SK-N-SH (cell line): ENCODE measurements at regions of chr1 and their contacts with region 1.

Region 1: DNA sequence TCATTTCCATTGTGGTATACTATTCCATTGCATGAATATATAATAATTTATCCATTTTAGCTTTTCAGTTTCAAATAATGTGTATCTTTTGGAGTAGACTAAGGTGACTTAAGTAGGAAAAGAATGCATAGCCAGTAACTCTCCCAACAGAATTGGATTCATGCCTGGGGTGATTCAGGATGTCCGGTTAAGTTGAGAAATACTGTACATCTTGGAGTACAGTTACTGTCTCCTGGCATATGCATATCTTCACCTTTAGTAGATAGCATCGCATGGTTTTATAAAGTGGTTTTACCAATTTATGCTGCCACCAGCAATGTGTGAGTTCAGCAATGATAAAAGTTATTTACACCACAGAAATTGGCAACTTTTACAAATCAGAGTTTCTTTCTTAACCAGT is 18.6 kb upstream of the SLC6A9 start:
- DNase-seq: no peak
- H3K4me3 ChIP-seq: peak overlapping the region in 1 of 2 experiments; percentile 32; a peak in 1 of 4 replicates
- H3K27ac ChIP-seq: peak overlapping the region in 1 of 2 experiments; percentile 91; a peak in 2 of 4 replicates
- H3K4me1 ChIP-seq: peaks cover 0 to 17% of the 10 kb centered on the region in 2 experiments
- H3K27me3 ChIP-seq: no peaks in the 10 kb centered on the region
- CTCF ChIP-seq: no peak
- EP300 ChIP-seq: peak in 1 of 2 experiments; percentile 89; a peak in 2 of 4 replicates
- RAD21 ChIP-seq: no peak

Region 2: DNA sequence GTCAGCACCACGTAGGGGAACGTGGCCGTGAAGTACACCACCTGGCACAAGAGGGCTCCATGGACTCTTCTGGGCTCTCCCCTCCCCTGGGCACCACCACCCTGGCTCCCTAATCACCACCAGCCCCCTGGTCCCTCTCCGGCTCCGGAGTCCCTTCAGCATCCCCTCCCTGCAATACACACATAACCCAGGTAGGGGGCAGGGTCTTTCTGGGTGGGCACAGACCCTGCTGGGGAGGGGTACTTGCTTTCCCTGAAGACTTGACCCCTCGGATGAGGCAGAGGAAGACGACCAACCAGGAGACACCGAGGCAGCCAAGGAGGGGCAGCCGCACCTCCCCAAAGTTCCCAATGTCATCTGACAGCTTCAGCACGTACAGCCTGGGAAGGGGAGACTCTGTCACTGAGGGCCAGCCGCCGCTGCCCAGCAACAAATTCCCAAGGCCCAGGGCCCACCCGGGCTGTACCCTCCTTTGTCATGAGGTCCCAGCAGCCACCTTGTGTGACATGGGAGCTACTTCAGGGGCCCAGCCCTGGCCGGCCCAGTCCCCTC is 47.2 kb before region 1 on chr1:
- CTCF ChIA-PET with region 1: interaction called, 153 read pairs
- POLR2A ChIA-PET with region 1: no interaction called
- DNase-seq: peak; percentile 59
- H3K4me3 ChIP-seq: no peak overlapping the region
- H3K27ac ChIP-seq: no peak overlapping the region
- H3K4me1 ChIP-seq: peaks cover 0 to 31% of the 10 kb centered on the region in 2 experiments; a peak in 2 of 4 replicates
- H3K27me3 ChIP-seq: no peaks in the 10 kb centered on the region
- CTCF ChIP-seq: peak; percentile 30
- EP300 ChIP-seq: no peak
- RAD21 ChIP-seq: no peak

Region 3: GRCh38 chr1:44012941-44013609 is 36.8 kb before region 1 on chr1:
- CTCF ChIA-PET with region 1: interaction called, 20 read pairs
- POLR2A ChIA-PET with region 1: no interaction called
- DNase-seq: no peak
- H3K4me3 ChIP-seq: no peak overlapping the region
- H3K27ac ChIP-seq: no peak overlapping the region
- H3K4me1 ChIP-seq: peaks cover 3 to 6% of the 10 kb centered on the region in 2 experiments; a peak in 2 of 4 replicates
- H3K27me3 ChIP-seq: no peaks in the 10 kb centered on the region
- CTCF ChIP-seq: no peak
- EP300 ChIP-seq: no peak
- RAD21 ChIP-seq: no peak

Region 4: DNA sequence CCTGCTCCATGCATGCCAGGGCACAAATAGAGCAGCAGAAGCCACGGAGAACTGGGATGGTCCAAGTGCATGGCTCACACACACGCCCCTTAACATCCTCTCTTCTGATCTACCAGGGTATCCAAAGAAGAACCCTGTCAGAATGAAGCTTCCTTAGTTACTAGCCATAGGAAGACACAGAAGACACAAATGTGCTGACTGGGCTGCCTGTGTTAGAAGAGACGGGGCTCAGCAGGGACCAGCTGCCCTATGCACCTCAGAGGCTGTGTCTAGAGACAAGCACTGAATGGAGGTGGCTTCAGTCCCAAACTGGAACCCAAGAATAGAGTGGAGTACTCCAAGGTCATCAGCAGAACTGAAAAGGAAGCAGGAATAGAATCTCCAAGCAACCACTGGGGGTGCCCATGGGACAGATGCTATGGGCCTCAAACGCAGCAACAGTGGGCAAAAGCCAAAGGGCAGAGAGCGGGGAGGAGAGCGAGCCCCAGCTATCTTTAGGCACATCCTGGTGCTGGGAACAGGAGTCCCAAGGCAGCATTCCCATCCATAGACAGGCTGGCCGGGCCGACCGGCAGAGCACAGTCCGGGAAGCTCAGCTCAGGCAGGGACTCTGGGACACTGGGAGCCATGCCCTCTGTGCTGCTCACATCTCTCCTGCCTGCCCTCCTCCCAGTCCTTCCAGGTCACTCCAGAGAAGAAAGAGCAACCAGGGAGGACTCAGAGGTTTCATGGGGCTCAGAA is 28.1 kb before region 1 on chr1:
- CTCF ChIA-PET with region 1: interaction called, 14 read pairs
- POLR2A ChIA-PET with region 1: no interaction called
- DNase-seq: no peak
- H3K4me3 ChIP-seq: no peak overlapping the region
- H3K27ac ChIP-seq: no peak overlapping the region
- H3K4me1 ChIP-seq: peaks cover 0 to 14% of the 10 kb centered on the region in 2 experiments; a peak in 1 of 4 replicates
- H3K27me3 ChIP-seq: no peaks in the 10 kb centered on the region
- CTCF ChIP-seq: no peak
- EP300 ChIP-seq: no peak
- RAD21 ChIP-seq: no peak

Region 5: GRCh38 chr1:44029906-44030604 is 19.8 kb before region 1 on chr1:
- CTCF ChIA-PET with region 1: interaction called, 106 read pairs
- POLR2A ChIA-PET with region 1: interaction called, 4 read pairs
- DNase-seq: peak; percentile 88
- H3K4me3 ChIP-seq: peak overlapping the region; percentile 82 to 93
- H3K27ac ChIP-seq: peak overlapping the region; percentile 74 to 87
- H3K4me1 ChIP-seq: peaks cover 11 to 25% of the 10 kb centered on the region in 2 experiments; a peak in 2 of 4 replicates
- H3K27me3 ChIP-seq: no peaks in the 10 kb centered on the region
- CTCF ChIP-seq: no peak
- EP300 ChIP-seq: no peak
- RAD21 ChIP-seq: no peak

Region 6: GRCh38 chr1:44068442-44068921 is 18.6 kb after region 1 on chr1:
- CTCF ChIA-PET with region 1: interaction called, 10 read pairs
- POLR2A ChIA-PET with region 1: no interaction called
- DNase-seq: no peak
- H3K4me3 ChIP-seq: no peak overlapping the region
- H3K27ac ChIP-seq: no peak overlapping the region
- H3K4me1 ChIP-seq: peaks cover 0 to 4% of the 10 kb centered on the region in 2 experiments; a peak in 1 of 4 replicates
- H3K27me3 ChIP-seq: no peaks in the 10 kb centered on the region
- CTCF ChIP-seq: no peak
- EP300 ChIP-seq: no peak
- RAD21 ChIP-seq: no peak

Region 7: DNA sequence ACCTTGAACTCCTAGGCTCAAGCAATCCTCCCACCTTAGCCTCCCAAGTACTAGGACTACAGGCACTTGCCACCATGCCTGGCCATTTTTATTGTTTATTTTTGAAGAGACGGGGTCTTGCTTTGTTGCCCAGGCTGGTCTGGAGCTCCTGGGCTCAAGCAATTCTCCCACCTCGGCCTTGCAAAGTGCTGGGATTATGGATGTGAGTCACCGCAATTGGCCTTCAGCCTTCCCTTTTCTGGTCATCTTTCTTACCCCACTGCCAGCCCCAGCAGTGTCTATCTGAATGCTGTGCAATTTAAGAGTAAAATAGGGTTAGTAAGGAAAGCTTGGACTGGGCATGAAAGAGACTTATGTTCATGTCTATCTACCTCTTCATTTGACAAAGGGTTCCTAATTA is 62.6 kb after region 1 on chr1:
- CTCF ChIA-PET with region 1: no interaction called
- POLR2A ChIA-PET with region 1: no interaction called
- DNase-seq: no peak
- H3K4me3 ChIP-seq: no peak overlapping the region
- H3K27ac ChIP-seq: no peak overlapping the region
- H3K4me1 ChIP-seq: no peaks in the 10 kb centered on the region; a peak in 1 of 4 replicates
- H3K27me3 ChIP-seq: no peaks in the 10 kb centered on the region
- CTCF ChIP-seq: no peak
- EP300 ChIP-seq: no peak
- RAD21 ChIP-seq: no peak

Region 8: DNA sequence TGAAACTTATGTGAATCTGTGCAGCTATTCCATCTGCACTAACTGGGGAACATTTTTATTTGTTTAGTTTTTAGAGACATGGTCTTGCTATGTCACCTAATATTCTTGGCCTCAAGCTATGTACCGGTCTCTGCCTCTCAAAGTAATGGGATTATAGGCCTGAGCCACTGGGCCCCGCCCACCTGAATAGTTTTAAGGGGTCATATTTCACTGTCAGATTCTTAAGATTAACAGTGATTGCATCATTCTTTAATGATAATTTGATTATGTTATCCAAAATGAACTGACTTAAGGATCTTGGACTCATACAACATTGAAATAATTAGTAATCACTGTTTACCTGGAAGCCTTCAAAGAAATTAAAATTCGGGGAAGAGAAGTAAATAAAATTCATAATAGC is 104.2 kb after region 1 on chr1:
- CTCF ChIA-PET with region 1: no interaction called
- POLR2A ChIA-PET with region 1: no interaction called
- DNase-seq: no peak
- H3K4me3 ChIP-seq: no peak overlapping the region
- H3K27ac ChIP-seq: no peak overlapping the region
- H3K4me1 ChIP-seq: peaks cover 0 to 16% of the 10 kb centered on the region in 2 experiments; a peak in 1 of 4 replicates
- H3K27me3 ChIP-seq: no peaks in the 10 kb centered on the region
- CTCF ChIP-seq: no peak
- EP300 ChIP-seq: no peak
- RAD21 ChIP-seq: no peak